Psoas muscle (tissue), 8 donors: ENCODE measurements at regions of chr11 and their contacts with region 1.

Region 1: DNA sequence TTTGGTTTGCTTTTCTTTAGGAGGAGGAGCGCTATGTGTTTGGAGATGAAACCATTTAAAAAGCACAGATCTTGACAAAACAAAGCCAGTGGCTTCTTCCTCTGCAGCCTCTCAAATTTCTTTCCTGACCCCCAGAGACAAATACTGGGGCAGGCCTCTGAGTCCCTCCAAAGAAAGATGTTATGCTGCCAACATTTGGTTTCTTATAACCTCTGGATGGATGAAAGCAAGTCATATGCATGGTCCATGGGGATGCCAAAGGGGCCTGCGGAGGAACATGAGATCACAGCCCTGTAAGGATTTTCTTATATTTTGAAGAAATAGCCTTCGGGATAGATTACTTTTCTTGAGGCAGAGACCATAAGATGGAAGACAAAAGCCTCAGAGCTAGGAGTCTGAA is 179.1 kb downstream of the TENM4 start:
- DNase-seq: no peak
- ATAC-seq: no peak
- H3K4me3 ChIP-seq: no peak overlapping the region
- H3K27ac ChIP-seq: no peak overlapping the region
- H3K4me1 ChIP-seq: no peaks in the 10 kb centered on the region
- H3K27me3 ChIP-seq: no peaks in the 10 kb centered on the region
- CTCF ChIP-seq: no peak

Region 2: GRCh38 chr11:79287952-79288351 is 26.3 kb after region 1 on chr11:
- intact Hi-C with region 1: loop called in 1 of 2 experiments (anchors 1 kb)
- DNase-seq: no peak
- ATAC-seq: no peak
- H3K4me3 ChIP-seq: no peak overlapping the region
- H3K27ac ChIP-seq: no peak overlapping the region
- H3K4me1 ChIP-seq: no peaks in the 10 kb centered on the region
- H3K27me3 ChIP-seq: no peaks in the 10 kb centered on the region
- CTCF ChIP-seq: no peak

Region 3: GRCh38 chr11:79321263-79321662 is 59.6 kb after region 1 on chr11:
- intact Hi-C with region 1: no loop called
- DNase-seq: no peak
- ATAC-seq: no peak
- H3K4me3 ChIP-seq: no peak overlapping the region
- H3K27ac ChIP-seq: no peak overlapping the region
- H3K4me1 ChIP-seq: no peaks in the 10 kb centered on the region
- H3K27me3 ChIP-seq: no peaks in the 10 kb centered on the region
- CTCF ChIP-seq: no peak